ENCODE measurements at regions of chr12 and their contacts with region 1.

Region 1: GRCh38 chr12:55738123-55739024 is 4.5 kb upstream of the GDF11 start:
- DNase-seq: peak; percentile 90
- H3K4me3 Mint-ChIP-seq: peak overlapping the region; percentile 87
- H3K27ac Mint-ChIP-seq: peak overlapping the region; percentile 86
- H3K4me1 Mint-ChIP-seq: peaks cover 43% of the 10 kb centered on the region
- H3K27me3 Mint-ChIP-seq: peaks cover 11% of the 10 kb centered on the region

Region 2: GRCh38 chr12:55755246-55755645 is 16.9 kb after region 1 on chr12:
- CTCF ChIA-PET with region 1: interaction called, 15 read pairs
- POLR2A ChIA-PET with region 1: interaction called, 3 read pairs
- DNase-seq: no peak
- H3K4me3 Mint-ChIP-seq: no peak overlapping the region
- H3K27ac Mint-ChIP-seq: no peak overlapping the region
- H3K4me1 Mint-ChIP-seq: no peaks in the 10 kb centered on the region
- H3K27me3 Mint-ChIP-seq: no peaks in the 10 kb centered on the region

Region 3: DNA sequence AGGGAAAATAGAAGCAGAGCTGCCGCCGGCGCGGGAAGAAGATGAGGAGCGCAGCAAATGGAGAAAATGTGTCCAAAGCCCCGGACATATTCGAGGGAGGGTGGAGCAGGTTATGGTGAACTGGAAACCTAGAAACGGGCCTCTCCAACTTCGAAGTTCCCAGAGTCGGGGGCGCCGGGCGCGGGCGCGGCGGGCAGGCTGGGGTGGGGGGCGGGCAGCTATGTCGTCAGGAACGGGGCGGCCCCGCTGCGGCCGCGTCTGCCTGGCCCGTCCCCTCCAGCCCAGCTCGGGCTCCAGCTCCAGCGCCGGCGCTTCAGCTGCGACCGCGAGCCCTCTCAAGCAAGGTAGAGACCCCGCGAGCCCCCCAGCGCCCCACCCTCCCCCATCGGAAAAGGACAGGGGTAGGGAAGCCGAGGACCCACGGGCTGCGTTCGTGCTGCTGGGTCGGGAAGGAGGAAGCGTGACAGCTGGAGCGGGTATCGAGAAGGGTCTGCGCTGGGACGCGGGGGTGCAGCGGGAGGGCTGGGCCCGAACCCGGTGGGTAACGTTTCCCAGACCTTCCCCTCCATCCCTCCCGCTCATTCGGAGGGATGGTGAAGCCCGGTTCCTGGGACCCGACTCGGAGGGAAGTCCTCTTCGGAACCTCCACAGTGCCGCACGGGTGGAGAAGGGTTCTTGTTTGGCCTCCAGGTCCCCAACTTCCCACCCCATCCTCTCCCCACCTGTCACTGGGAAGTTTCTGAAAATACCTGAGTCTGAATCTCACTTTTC is 193.6 kb after region 1 on chr12:
- CTCF ChIA-PET with region 1: interaction called, 19 read pairs
- POLR2A ChIA-PET with region 1: no interaction called
- DNase-seq: peak; percentile 29
- H3K4me3 Mint-ChIP-seq: peak overlapping the region; percentile 89
- H3K27ac Mint-ChIP-seq: peak overlapping the region; percentile 99
- H3K4me1 Mint-ChIP-seq: peaks cover 48% of the 10 kb centered on the region
- H3K27me3 Mint-ChIP-seq: no peaks in the 10 kb centered on the region

Region 4: GRCh38 chr12:55973598-55974307 is 235.4 kb after region 1 on chr12 and contains the start of gene RAB5B:
- CTCF ChIA-PET with region 1: interaction called, 12 read pairs
- POLR2A ChIA-PET with region 1: interaction called, 4 read pairs
- DNase-seq: peak; percentile 99
- H3K4me3 Mint-ChIP-seq: no peak within 1 kb of the TSS
- H3K27ac Mint-ChIP-seq: no peak within 1 kb of the TSS
- H3K4me1 Mint-ChIP-seq: peaks cover 34% of the 10 kb centered on the region
- H3K27me3 Mint-ChIP-seq: no peaks in the 10 kb centered on the region
- total RNA-seq, gene RAB5B: 56.9 to 58.1 TPM

Region 5: DNA sequence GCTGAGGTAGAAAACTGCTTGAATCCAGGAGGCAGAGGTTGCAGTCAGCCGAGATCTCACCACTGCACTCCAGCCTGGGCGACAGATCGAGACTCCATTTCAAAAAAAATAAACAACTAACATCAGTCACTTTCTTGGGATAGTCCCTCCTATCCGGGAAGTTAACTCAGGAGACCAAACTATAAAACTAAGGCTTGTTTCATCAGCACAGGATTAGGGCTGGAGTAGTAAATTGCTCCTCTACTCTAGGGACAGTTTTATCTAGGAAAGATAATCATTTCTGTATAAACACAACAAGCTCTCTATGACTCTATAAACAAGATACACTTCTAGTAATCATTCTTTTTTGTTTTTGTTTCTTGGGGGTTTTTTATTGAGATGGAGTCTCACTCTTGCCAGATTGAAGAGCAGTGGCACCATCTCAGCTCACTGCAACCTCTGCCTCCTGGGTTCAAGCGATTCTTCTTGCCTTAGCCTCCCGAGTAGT is 315.1 kb after region 1 on chr12:
- CTCF ChIA-PET with region 1: no interaction called
- POLR2A ChIA-PET with region 1: interaction called, 16 read pairs
- DNase-seq: no peak
- H3K4me3 Mint-ChIP-seq: no peak overlapping the region
- H3K27ac Mint-ChIP-seq: no peak overlapping the region
- H3K4me1 Mint-ChIP-seq: peaks cover 9% of the 10 kb centered on the region
- H3K27me3 Mint-ChIP-seq: peaks cover 3% of the 10 kb centered on the region